K562 (cell line): ENCODE measurements at regions of chrX and their contacts with region 1.

Region 1: DNA sequence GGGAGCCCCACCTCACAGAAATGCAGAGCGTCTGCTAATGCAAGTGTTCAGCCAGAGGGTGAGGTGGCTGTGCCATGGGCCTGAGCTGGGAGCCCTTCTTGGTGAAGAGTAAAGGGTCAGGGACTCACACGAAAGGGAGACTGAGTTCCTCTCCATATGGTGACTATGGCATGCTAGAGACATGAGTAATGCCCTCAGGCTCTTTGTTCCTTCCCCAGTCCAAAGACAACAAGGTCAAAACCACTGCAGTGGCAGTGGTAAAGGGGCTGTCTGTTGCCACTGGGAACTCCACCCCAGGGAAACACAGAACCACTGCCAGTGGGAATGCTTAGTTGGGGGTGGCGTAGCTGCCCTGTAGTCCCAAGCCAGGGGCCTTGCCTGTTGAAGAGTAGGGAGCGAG is 22.4 kb downstream of the RAB40AL start:
- DNase-seq: no peak
- ATAC-seq: no peak
- H3K4me3 ChIP-seq: no peak overlapping the region
- H3K27ac ChIP-seq: no peak overlapping the region
- H3K4me1 ChIP-seq: no peaks in the 10 kb centered on the region
- H3K27me3 ChIP-seq: no peaks in the 10 kb centered on the region
- CTCF ChIP-seq: no peak
- EP300 ChIP-seq: no peak
- POLR2A ChIP-seq: no peak
- RAD21 ChIP-seq: no peak

Region 2: GRCh38 chrX:102546828-102547493 is 412.5 kb before region 1 on chrX:
- CTCF ChIA-PET with region 1: no interaction called
- POLR2A ChIA-PET with region 1: no interaction called
- in situ Hi-C with region 1: no loop called
- intact Hi-C with region 1: no loop called
- DNase-seq: no peak
- ATAC-seq: no peak
- H3K4me3 ChIP-seq: 0 out of 2 replicates have a peak overlapping the region, but pooled peaks have one; percentile 13
- H3K27ac ChIP-seq: no peak overlapping the region
- H3K4me1 ChIP-seq: peaks cover 0 to 8% of the 10 kb centered on the region in 2 experiments; a peak in 2 of 5 replicates
- H3K27me3 ChIP-seq: peaks cover 0 to 18% of the 10 kb centered on the region in 2 experiments; a peak in 3 of 5 replicates
- CTCF ChIP-seq: no peak
- EP300 ChIP-seq: no peak
- POLR2A ChIP-seq: no peak
- RAD21 ChIP-seq: no peak

Region 3: DNA sequence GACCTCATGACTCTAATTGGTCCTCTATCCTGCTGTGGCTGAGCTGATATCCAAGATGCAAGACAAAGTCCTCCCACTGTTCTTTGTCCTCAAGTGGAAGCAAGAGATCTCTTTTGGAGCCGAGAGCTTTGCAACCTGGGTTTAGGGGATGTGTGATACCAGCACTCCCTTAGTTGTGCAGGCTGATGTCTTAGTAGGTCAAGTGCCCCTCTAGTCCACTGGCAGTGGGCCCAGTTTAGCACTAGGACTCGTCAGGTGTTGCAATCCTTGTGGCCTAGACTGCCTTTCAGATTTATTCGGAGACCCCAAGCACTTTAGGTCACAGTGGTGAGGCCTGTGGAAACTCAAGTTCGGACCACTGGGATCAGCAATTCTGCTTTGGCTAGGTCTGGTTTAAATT is 174.9 kb before region 1 on chrX:
- CTCF ChIA-PET with region 1: no interaction called
- POLR2A ChIA-PET with region 1: no interaction called
- in situ Hi-C with region 1: no loop called
- intact Hi-C with region 1: no loop called
- DNase-seq: no peak
- ATAC-seq: no peak
- H3K4me3 ChIP-seq: no peak overlapping the region
- H3K27ac ChIP-seq: no peak overlapping the region
- H3K4me1 ChIP-seq: no peaks in the 10 kb centered on the region
- H3K27me3 ChIP-seq: no peaks in the 10 kb centered on the region
- CTCF ChIP-seq: no peak
- EP300 ChIP-seq: no peak
- POLR2A ChIP-seq: no peak
- RAD21 ChIP-seq: no peak

Region 4: DNA sequence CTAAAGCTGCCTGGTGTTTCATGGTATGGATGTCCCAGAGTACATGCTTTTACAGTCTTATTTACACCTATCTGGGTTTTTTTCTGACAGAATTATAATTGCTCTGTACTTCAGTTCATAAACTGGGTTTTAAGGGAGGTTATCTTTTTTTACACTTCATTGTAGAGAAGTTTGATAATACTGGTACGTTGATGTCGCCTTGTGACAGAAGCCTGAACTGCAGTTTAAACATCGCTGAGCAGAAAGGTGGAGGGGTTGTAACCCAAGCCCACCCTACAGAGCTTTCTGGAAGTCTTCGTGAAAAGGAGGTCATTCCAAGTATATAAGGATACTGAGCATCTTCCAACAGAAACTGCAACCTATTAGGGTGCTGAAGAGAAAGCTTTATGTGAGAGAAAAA is 58.1 kb after region 1 on chrX:
- CTCF ChIA-PET with region 1: no interaction called
- POLR2A ChIA-PET with region 1: no interaction called
- in situ Hi-C with region 1: no loop called
- intact Hi-C with region 1: no loop called
- DNase-seq: no peak
- ATAC-seq: no peak
- H3K4me3 ChIP-seq: no peak overlapping the region
- H3K27ac ChIP-seq: no peak overlapping the region
- H3K4me1 ChIP-seq: no peaks in the 10 kb centered on the region
- H3K27me3 ChIP-seq: no peaks in the 10 kb centered on the region
- CTCF ChIP-seq: peak in 2 of 3 experiments; percentile 11 to 23; a peak in 1 of 6 replicates
- EP300 ChIP-seq: no peak
- POLR2A ChIP-seq: no peak
- RAD21 ChIP-seq: no peak

Region 5: GRCh38 chrX:103170216-103170615 is 210.7 kb after region 1 on chrX:
- CTCF ChIA-PET with region 1: no interaction called
- POLR2A ChIA-PET with region 1: no interaction called
- in situ Hi-C with region 1: loop called (anchors 5 kb)
- intact Hi-C with region 1: no loop called
- DNase-seq: no peak
- ATAC-seq: no peak
- H3K4me3 ChIP-seq: no peak overlapping the region
- H3K27ac ChIP-seq: no peak overlapping the region
- H3K4me1 ChIP-seq: no peaks in the 10 kb centered on the region
- H3K27me3 ChIP-seq: no peaks in the 10 kb centered on the region; a peak in 1 of 5 replicates
- CTCF ChIP-seq: no peak
- EP300 ChIP-seq: no peak
- POLR2A ChIP-seq: no peak
- RAD21 ChIP-seq: no peak

Region 6: GRCh38 chrX:103175944-103176753 is 216.7 kb after region 1 on chrX:
- CTCF ChIA-PET with region 1: interaction called, 4 read pairs
- POLR2A ChIA-PET with region 1: no interaction called
- in situ Hi-C with region 1: loop called (anchors 5 kb)
- intact Hi-C with region 1: loop called (anchors 2 kb)
- DNase-seq: peak; percentile 49 to 67 (median 54)
- ATAC-seq: peak; percentile 88
- H3K4me3 ChIP-seq: no peak overlapping the region
- H3K27ac ChIP-seq: no peak overlapping the region
- H3K4me1 ChIP-seq: peaks cover 0 to 3% of the 10 kb centered on the region in 2 experiments; a peak in 2 of 5 replicates
- H3K27me3 ChIP-seq: no peaks in the 10 kb centered on the region; a peak in 1 of 5 replicates
- CTCF ChIP-seq: peak; percentile 63 to 79 (median 79)
- EP300 ChIP-seq: no peak
- POLR2A ChIP-seq: no peak
- RAD21 ChIP-seq: peak; percentile 63 to 81